SK-N-SH (cell line): ENCODE measurements at regions of chr15 and their contacts with region 1.

Region 1: DNA sequence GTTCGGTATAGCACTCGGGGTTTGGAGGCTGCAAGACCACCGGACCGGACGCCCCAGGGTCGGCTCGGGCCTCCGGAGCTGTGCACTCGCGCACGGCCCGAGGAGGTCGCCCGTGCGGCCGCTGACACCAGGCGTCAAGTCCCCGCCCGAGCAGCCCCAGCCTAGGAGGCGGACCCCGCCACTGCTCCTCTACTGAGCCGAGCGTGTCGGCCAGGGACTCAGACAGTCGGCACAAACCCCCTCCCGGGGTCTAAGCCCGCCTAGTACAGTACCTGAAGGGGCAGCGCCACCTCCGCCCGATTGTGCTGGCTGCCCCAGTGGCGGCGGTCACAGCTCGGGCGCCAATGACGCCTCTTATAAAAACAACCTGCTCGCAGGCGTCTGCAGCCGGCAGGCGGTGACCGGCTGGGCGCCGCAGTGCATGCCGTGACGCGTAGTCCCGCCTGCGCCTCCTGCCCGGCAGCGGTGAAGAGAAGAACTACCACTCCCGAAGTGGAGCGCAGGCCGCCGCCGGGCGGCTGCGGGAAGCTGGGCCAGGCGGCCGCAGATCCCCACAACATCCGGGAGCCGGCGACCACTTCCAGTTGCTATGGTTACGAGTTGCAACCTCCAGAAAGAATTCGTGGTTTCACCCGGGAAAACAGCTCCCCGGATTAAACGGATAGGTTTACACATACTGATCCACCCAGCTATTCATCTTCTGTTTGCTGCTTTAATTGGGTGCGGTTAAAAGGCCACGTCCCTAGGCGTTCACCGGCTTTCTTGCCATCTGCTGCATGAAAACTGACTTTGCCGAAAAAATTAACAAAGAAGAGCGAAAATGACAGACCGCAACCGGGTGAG is at the starts of genes CCPG1 and PIERCE2:
- DNase-seq: peak; percentile 94
- H3K4me3 ChIP-seq: peak within 1 kb of the TSS; percentile 77 to 78
- H3K27ac ChIP-seq: peak within 1 kb of the TSS; percentile 84 to 86
- H3K4me1 ChIP-seq: peaks cover 7 to 16% of the 10 kb centered on the region in 2 experiments; a peak in 2 of 4 replicates
- H3K27me3 ChIP-seq: no peaks in the 10 kb centered on the region
- CTCF ChIP-seq: peak; percentile 55
- EP300 ChIP-seq: peak in 1 of 2 experiments; percentile 6; a peak in 1 of 4 replicates
- RAD21 ChIP-seq: no peak
- polyA plus RNA-seq, gene CCPG1: 10.5 and 16.9 TPM in 2 replicates
- polyA plus RNA-seq, gene PIERCE2: 2.5 and 2.9 TPM in 2 replicates

Region 2: GRCh38 chr15:55318588-55319494 is 89.3 kb before region 1 on chr15 and contains the starts of genes PIGB and PIGBOS1:
- CTCF ChIA-PET with region 1: interaction called, 4 read pairs
- POLR2A ChIA-PET with region 1: interaction called, 22 read pairs
- DNase-seq: peak; percentile 85
- H3K4me3 ChIP-seq: peak within 1 kb of the TSS; percentile 67 to 99
- H3K27ac ChIP-seq: peak within 1 kb of the TSS; percentile 88
- H3K4me1 ChIP-seq: peaks cover 4 to 6% of the 10 kb centered on the region in 2 experiments; a peak in 3 of 4 replicates
- H3K27me3 ChIP-seq: no peaks in the 10 kb centered on the region
- CTCF ChIP-seq: no peak; the same call in 1 of the 2 replicates
- EP300 ChIP-seq: no peak; a peak in 1 of 4 replicates
- RAD21 ChIP-seq: no peak; the same call in 1 of the 2 replicates
- polyA plus RNA-seq, gene PIGB: 6.6 and 10.5 TPM in 2 replicates
- polyA plus RNA-seq, gene PIGBOS1: 18.2 and 23.6 TPM in 2 replicates

Region 3: DNA sequence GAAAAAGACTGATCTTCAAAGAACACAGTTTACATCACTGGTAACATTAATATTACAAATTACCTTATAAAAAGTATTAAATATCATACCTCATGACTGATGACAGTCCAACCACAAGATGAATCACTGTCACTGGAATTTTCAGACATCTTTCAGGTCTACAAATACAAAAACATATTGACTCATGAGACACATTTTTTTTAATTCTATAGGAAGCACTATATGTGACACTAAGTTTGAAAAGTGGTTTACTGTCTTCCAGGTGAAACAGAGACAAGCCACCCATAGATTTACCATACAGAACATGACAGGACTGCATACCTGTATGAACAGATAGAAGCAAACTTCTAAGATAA is 18.9 kb before region 1 on chr15:
- CTCF ChIA-PET with region 1: interaction called, 10 read pairs
- POLR2A ChIA-PET with region 1: no interaction called
- DNase-seq: no peak
- H3K4me3 ChIP-seq: no peak overlapping the region
- H3K27ac ChIP-seq: peak overlapping the region in 1 of 2 experiments; percentile 32; a peak in 1 of 4 replicates
- H3K4me1 ChIP-seq: no peaks in the 10 kb centered on the region
- H3K27me3 ChIP-seq: no peaks in the 10 kb centered on the region
- CTCF ChIP-seq: no peak
- EP300 ChIP-seq: no peak
- RAD21 ChIP-seq: no peak

Region 4: DNA sequence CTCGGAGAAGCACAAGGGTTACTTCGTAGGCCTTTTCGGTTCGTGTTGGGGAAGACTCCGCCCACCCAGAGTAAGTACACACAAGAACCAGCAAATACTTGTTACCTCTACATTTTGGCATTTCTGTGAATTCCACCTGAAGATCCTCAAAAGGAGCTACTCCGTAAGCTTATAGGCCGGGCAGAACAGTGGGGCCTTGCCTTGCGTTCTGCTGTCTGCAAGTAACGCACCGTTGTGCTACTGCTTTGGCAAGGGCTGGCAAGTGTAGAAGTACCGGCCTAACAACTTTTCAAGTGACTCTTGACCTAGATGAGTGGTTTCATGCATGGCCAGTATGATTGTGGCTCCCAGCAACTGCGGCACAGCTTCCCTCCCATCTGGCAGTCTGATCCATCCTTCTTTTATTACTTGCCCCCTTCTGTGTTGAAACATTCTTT is 106.3 kb after region 1 on chr15:
- CTCF ChIA-PET with region 1: no interaction called
- POLR2A ChIA-PET with region 1: no interaction called
- DNase-seq: no peak
- H3K4me3 ChIP-seq: no peak overlapping the region
- H3K27ac ChIP-seq: no peak overlapping the region
- H3K4me1 ChIP-seq: no peaks in the 10 kb centered on the region
- H3K27me3 ChIP-seq: no peaks in the 10 kb centered on the region
- CTCF ChIP-seq: no peak
- EP300 ChIP-seq: no peak
- RAD21 ChIP-seq: no peak

Region 5: DNA sequence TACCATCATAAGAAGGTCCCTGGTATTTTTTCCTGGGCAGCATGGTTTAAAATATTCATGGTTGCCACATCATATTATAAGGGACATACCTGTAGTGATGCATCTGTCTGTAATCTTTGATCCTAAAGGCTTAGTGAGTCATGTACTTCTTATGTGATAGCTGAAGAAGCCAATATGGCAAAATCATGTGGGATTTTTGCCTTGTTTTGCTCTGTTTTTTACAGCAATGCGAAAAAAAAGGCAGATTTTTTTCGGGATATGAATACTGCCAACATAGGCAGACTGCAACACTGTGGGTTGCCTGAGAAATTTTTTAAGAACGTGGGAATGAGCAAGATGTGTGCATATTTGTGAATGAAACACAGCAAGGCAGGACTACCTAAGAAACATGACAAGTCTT is 191.3 kb after region 1 on chr15:
- CTCF ChIA-PET with region 1: no interaction called
- POLR2A ChIA-PET with region 1: no interaction called
- DNase-seq: no peak
- H3K4me3 ChIP-seq: no peak overlapping the region
- H3K27ac ChIP-seq: no peak overlapping the region
- H3K4me1 ChIP-seq: no peaks in the 10 kb centered on the region
- H3K27me3 ChIP-seq: no peaks in the 10 kb centered on the region
- CTCF ChIP-seq: no peak
- EP300 ChIP-seq: no peak
- RAD21 ChIP-seq: no peak